Activated CD8-positive, alpha-beta T cell treated with anti-CD3 and anti-CD28 coated beads, Interleukin-2, amount 10 ng/mL, durations not matched to agents 7 days and 5 days (primary cell): ENCODE measurements at regions of chr7 and their contacts with region 1.

Region 1: GRCh38 chr7:28062197-28062991 is 118.2 kb downstream of the JAZF1 start:
- DNase-seq: peak; percentile 62
- ATAC-seq: peak; percentile 63
- H3K4me3 Mint-ChIP-seq: no peak overlapping the region
- H3K27ac Mint-ChIP-seq: no peak overlapping the region
- H3K4me1 Mint-ChIP-seq: no peaks in the 10 kb centered on the region
- H3K27me3 Mint-ChIP-seq: peaks cover 14% of the 10 kb centered on the region

Region 2: GRCh38 chr7:27952456-27953285 is 109.7 kb before region 1 on chr7:
- CTCF ChIA-PET with region 1: no interaction called
- POLR2A ChIA-PET with region 1: no interaction called
- DNase-seq: no peak
- ATAC-seq: no peak
- H3K4me3 Mint-ChIP-seq: no peak overlapping the region
- H3K27ac Mint-ChIP-seq: no peak overlapping the region
- H3K4me1 Mint-ChIP-seq: peaks cover 14% of the 10 kb centered on the region
- H3K27me3 Mint-ChIP-seq: no peaks in the 10 kb centered on the region

Region 3: GRCh38 chr7:28078036-28078901 is 15.9 kb after region 1 on chr7:
- CTCF ChIA-PET with region 1: interaction called, 56 read pairs
- POLR2A ChIA-PET with region 1: no interaction called
- DNase-seq: peak; percentile 62
- ATAC-seq: no peak
- H3K4me3 Mint-ChIP-seq: no peak overlapping the region
- H3K27ac Mint-ChIP-seq: no peak overlapping the region
- H3K4me1 Mint-ChIP-seq: no peaks in the 10 kb centered on the region
- H3K27me3 Mint-ChIP-seq: peaks cover 9% of the 10 kb centered on the region

Region 4: GRCh38 chr7:28245123-28245878 is 182.9 kb after region 1 on chr7:
- CTCF ChIA-PET with region 1: no interaction called
- POLR2A ChIA-PET with region 1: no interaction called
- DNase-seq: no peak
- ATAC-seq: no peak
- H3K4me3 Mint-ChIP-seq: no peak overlapping the region
- H3K27ac Mint-ChIP-seq: no peak overlapping the region
- H3K4me1 Mint-ChIP-seq: no peaks in the 10 kb centered on the region
- H3K27me3 Mint-ChIP-seq: peaks cover 21% of the 10 kb centered on the region